Endothelial cell of umbilical vein (primary cell): ENCODE measurements at regions of chr3 and their contacts with region 1.

Region 1: DNA sequence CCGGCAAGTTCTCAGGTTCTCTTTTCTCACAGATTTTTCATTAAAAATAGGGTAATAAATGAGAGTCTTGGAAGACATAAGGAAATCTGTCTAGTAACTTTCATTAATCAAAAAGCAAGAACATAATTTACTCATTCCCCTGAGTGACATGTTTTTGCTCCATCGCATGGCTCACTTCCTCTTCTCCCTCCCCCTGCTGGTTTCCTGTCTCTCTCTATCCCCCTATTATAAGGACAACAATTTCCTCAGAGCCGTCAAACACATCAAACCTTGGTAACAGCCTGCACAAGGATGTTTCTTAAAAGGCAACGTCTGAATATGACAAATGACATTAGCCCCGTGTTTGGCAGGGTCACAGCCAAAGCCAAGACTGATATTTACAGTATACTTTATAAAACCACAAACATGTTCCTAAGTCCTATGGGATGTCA is 1149.6 kb downstream of the IGSF11 start:
- DNase-seq: peak; percentile 72
- H3K4me3 ChIP-seq: no peak overlapping the region
- H3K27ac ChIP-seq: no peak overlapping the region
- H3K4me1 ChIP-seq: peaks cover 14% of the 10 kb centered on the region
- H3K27me3 ChIP-seq: no peaks in the 10 kb centered on the region
- CTCF ChIP-seq: no peak
- POLR2A ChIP-seq: no peak

Region 2: GRCh38 chr3:117553461-117553860 is 331.6 kb before region 1 on chr3:
- CTCF ChIA-PET with region 1: no interaction called
- POLR2A ChIA-PET with region 1: no interaction called
- dilution Hi-C with region 1: no loop called
- intact Hi-C with region 1: no loop called
- DNase-seq: peak; percentile 12
- H3K4me3 ChIP-seq: no peak overlapping the region
- H3K27ac ChIP-seq: no peak overlapping the region
- H3K4me1 ChIP-seq: no peaks in the 10 kb centered on the region
- H3K27me3 ChIP-seq: no peaks in the 10 kb centered on the region
- CTCF ChIP-seq: no peak
- POLR2A ChIP-seq: no peak

Region 3: GRCh38 chr3:117898722-117899522 is 13.9 kb after region 1 on chr3:
- CTCF ChIA-PET with region 1: interaction called, 10 read pairs
- POLR2A ChIA-PET with region 1: no interaction called
- dilution Hi-C with region 1: no loop called
- intact Hi-C with region 1: no loop called
- DNase-seq: peak; percentile 44
- H3K4me3 ChIP-seq: no peak overlapping the region
- H3K27ac ChIP-seq: no peak overlapping the region
- H3K4me1 ChIP-seq: no peaks in the 10 kb centered on the region
- H3K27me3 ChIP-seq: no peaks in the 10 kb centered on the region
- CTCF ChIP-seq: peak; percentile 40 to 56
- POLR2A ChIP-seq: no peak